ENCODE measurements at regions of chr6 and their contacts with region 1.

Region 1: DNA sequence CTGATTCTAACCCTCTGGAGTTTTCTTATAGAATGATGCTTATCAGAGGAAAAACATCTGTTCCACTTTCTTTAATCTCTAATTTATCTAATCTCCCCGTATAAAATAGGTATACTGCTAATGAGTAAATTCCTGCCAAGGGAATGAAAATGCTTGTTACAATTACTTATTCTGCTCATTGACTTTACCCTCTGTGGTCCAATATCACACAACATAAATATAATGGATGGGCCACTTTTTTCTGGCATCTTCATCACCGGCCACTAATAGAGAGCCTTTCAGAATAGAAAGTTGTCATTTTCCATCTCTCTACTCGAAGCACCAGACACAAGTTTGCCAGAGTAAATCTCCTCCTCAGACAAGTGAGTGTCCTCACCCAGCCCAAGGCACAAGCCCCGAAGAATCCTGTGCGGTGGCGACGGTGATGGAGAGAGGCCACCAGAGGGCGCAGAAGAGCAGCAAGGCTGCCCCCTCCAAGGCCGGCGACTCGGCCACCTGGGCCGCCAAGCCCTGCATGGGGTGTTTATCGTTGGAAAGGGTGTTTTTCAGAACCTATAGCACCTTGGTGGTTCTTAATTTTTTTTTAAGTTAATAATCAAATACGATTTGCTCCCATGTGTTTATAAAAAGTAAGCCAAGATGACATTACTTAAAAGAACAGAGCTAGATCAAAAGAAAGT is 212.9 kb upstream of the ARID1B start:
- DNase-seq: peak; percentile 33
- ATAC-seq: peak; percentile 98
- H3K4me3 ChIP-seq: no peak overlapping the region
- H3K27ac ChIP-seq: no peak overlapping the region; the same call in 1 of the 2 replicates
- H3K4me1 ChIP-seq: no peaks in the 10 kb centered on the region
- H3K27me3 ChIP-seq: no peaks in the 10 kb centered on the region
- CTCF ChIP-seq: peak; percentile 97

Region 2: DNA sequence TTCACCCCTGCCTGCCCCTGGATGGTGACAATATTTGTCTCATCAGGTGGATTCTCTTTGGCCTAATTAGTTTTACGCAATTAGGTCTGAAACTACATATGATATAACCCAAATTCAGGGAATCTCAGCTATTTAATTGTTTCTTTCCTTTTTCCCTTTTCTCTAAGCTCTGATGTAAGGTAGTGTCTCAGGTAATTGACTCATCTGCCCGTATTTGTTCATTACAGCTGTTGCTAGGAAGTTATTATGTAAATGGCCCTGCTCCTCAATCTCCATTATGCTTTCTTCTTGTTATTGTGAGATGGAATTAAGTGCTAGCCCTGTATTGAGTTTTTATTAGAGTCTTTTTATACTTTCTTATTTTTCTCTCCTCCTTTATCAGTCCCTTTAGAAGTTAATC is 165.3 kb before region 1 on chr6:
- CTCF ChIA-PET with region 1: interaction called, 11 read pairs
- POLR2A ChIA-PET with region 1: no interaction called
- in situ Hi-C with region 1: no loop called
- intact Hi-C with region 1: no loop called
- DNase-seq: no peak
- ATAC-seq: no peak
- H3K4me3 ChIP-seq: no peak overlapping the region
- H3K27ac ChIP-seq: no peak overlapping the region
- H3K4me1 ChIP-seq: peaks cover 2% of the 10 kb centered on the region; the same call in 1 of the 2 replicates
- H3K27me3 ChIP-seq: no peaks in the 10 kb centered on the region
- CTCF ChIP-seq: no peak

Region 3: GRCh38 chr6:156464100-156464878 is 100.0 kb before region 1 on chr6:
- CTCF ChIA-PET with region 1: no interaction called
- POLR2A ChIA-PET with region 1: no interaction called
- in situ Hi-C with region 1: no loop called
- intact Hi-C with region 1: no loop called
- DNase-seq: no peak
- ATAC-seq: no peak
- H3K4me3 ChIP-seq: no peak overlapping the region
- H3K27ac ChIP-seq: no peak overlapping the region; the same call in 1 of the 2 replicates
- H3K4me1 ChIP-seq: no peaks in the 10 kb centered on the region
- H3K27me3 ChIP-seq: no peaks in the 10 kb centered on the region; the same call in 1 of the 2 replicates
- CTCF ChIP-seq: no peak

Region 4: DNA sequence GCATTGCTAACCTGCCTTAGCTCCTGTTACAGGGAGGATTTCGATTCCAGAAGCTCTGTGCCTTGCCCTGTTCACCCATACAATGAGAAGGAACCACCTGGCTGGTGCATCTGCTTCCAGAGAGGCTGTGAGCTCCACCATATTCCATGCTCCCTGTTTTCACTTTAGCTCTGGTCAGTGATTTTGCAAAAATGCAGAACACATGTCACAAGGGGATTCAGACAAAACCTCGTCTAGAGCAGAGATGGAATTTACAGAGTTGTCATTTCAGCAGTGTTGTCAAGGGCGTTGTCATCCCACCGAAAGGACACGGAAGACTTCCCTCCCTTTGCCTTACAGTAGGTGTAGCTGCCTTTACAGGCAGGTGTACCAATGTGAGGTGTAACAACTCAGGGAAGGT is 10.1 kb before region 1 on chr6:
- CTCF ChIA-PET with region 1: no interaction called
- POLR2A ChIA-PET with region 1: no interaction called
- in situ Hi-C with region 1: no loop called
- intact Hi-C with region 1: no loop called
- DNase-seq: no peak
- ATAC-seq: no peak
- H3K4me3 ChIP-seq: no peak overlapping the region
- H3K27ac ChIP-seq: peak overlapping the region; percentile 29; the same call in 1 of the 2 replicates
- H3K4me1 ChIP-seq: peaks cover 3% of the 10 kb centered on the region; the same call in 1 of the 2 replicates
- H3K27me3 ChIP-seq: no peaks in the 10 kb centered on the region
- CTCF ChIP-seq: no peak

Region 5: DNA sequence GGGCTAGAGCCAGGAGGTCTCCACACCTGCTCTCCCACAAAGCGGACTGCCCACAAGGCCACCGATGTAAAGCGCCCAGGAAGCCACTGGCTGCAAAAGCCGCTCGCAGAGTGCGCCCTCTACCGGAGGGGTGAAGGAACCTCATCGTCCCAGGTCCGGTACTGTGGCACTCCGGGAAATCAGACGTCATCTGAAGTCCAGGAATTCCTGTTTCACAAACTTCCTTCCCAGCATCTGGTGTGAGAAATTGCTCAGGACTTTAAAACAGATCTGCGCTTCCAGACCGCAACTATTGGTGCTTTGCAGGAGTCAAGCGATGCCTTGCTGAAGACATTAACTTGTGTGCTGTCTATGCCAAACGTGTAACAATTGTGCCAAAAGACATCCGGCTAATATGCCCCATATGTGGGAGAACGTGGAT is 97.8 kb after region 1 on chr6:
- CTCF ChIA-PET with region 1: no interaction called
- POLR2A ChIA-PET with region 1: no interaction called
- in situ Hi-C with region 1: no loop called
- intact Hi-C with region 1: loop called (anchors 5 kb)
- DNase-seq: peak; percentile 25
- ATAC-seq: peak; percentile 98
- H3K4me3 ChIP-seq: peak overlapping the region; percentile 12 to 46; a peak in 3 of 4 replicates
- H3K27ac ChIP-seq: peak overlapping the region; percentile 51
- H3K4me1 ChIP-seq: no peaks in the 10 kb centered on the region; the same call in 1 of the 2 replicates
- H3K27me3 ChIP-seq: no peaks in the 10 kb centered on the region
- CTCF ChIP-seq: peak; percentile 95